ENCODE measurements at regions of chr6 and their contacts with region 1.

Region 1: GRCh38 chr6:111259089-111259831 is 172.0 kb downstream of the SLC16A10 start:
- DNase-seq: peak; percentile 98
- H3K4me3 ChIP-seq: peak overlapping the region; percentile 65 to 84 (median 80)
- H3K27ac ChIP-seq: peak overlapping the region; percentile 68
- H3K4me1 ChIP-seq: peaks cover 22% of the 10 kb centered on the region
- H3K27me3 ChIP-seq: no peaks in the 10 kb centered on the region
- CTCF ChIP-seq: peak; percentile 94 to 96

Region 2: GRCh38 chr6:111430605-111431378 is 171.5 kb after region 1 on chr6:
- CTCF ChIA-PET with region 1: no interaction called
- dilution Hi-C with region 1: no loop called
- in situ Hi-C with region 1: no loop called
- intact Hi-C with region 1: no loop called
- DNase-seq: no peak
- H3K4me3 ChIP-seq: no peak overlapping the region
- H3K27ac ChIP-seq: no peak overlapping the region
- H3K4me1 ChIP-seq: peaks cover 18% of the 10 kb centered on the region
- H3K27me3 ChIP-seq: no peaks in the 10 kb centered on the region
- CTCF ChIP-seq: no peak

Region 3: DNA sequence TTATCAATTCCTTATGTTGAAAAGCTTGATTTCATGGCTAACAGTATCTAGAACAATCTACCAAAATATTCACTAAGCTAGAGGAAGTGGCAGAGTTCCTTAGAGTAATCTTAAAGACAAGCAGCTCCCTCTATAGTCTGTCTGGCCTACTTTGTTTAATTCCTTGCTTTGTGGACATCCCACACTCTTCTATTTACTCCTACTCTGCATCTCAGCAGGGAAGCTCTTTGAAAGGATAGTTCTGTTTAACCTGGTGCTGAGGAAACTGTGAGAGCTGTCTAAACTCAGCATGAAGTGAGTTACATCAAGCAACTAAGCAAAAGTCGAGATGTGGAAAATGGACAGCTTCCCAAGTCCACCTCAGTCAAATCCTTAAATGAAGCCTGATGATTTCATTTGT is 219.5 kb after region 1 on chr6:
- CTCF ChIA-PET with region 1: interaction called, 9 read pairs
- dilution Hi-C with region 1: no loop called
- in situ Hi-C with region 1: no loop called
- intact Hi-C with region 1: loop called (anchors 1 kb)
- DNase-seq: peak; percentile 60
- H3K4me3 ChIP-seq: no peak overlapping the region
- H3K27ac ChIP-seq: peak overlapping the region; percentile 6
- H3K4me1 ChIP-seq: peaks cover 15% of the 10 kb centered on the region
- H3K27me3 ChIP-seq: no peaks in the 10 kb centered on the region
- CTCF ChIP-seq: peak; percentile 32 to 54

Region 4: GRCh38 chr6:111565326-111566221 is 306.3 kb after region 1 on chr6:
- CTCF ChIA-PET with region 1: no interaction called
- dilution Hi-C with region 1: no loop called
- in situ Hi-C with region 1: no loop called
- intact Hi-C with region 1: loop called (anchors 2 kb)
- DNase-seq: no peak
- H3K4me3 ChIP-seq: no peak overlapping the region
- H3K27ac ChIP-seq: peak overlapping the region; percentile 75
- H3K4me1 ChIP-seq: peaks cover 54% of the 10 kb centered on the region
- H3K27me3 ChIP-seq: no peaks in the 10 kb centered on the region
- CTCF ChIP-seq: peak; percentile 19 to 46

Region 5: DNA sequence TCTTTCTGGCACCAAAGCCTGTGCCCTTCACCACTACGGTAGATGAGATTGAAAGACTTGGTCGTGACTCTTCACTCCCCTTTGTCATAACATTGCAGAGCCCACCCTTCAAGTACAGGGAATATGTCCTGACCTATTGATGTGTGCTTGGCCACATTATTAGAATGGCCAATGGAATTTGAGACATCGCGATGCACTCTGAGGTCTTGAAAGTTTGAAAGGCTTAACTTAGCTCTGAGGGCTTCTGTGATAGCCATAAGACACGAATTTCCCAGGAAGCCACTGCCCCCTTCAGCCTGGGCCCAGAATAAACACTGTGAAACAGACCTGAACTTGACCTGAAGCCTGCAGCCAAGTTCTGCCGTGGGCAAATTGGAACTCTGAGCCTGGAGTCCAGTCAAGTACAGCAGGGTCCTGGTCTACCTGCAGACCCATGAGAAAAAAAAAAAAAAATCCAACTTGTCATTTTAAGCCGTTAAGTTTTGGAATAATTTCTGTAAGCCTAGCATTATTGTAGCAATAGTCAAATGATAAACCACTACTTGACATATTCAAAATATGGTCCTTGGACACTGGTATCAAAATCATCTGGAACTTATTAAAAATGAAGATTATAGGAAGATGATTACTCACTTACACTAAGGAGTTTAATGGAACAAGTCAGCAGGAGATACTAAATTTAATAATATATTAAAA is 383.4 kb after region 1 on chr6:
- CTCF ChIA-PET with region 1: no interaction called
- dilution Hi-C with region 1: no loop called
- in situ Hi-C with region 1: no loop called
- intact Hi-C with region 1: loop called (anchors 1 kb)
- DNase-seq: peak; percentile 65
- H3K4me3 ChIP-seq: no peak overlapping the region
- H3K27ac ChIP-seq: no peak overlapping the region
- H3K4me1 ChIP-seq: no peaks in the 10 kb centered on the region
- H3K27me3 ChIP-seq: no peaks in the 10 kb centered on the region
- CTCF ChIP-seq: peak; percentile 54 to 74

Region 6: DNA sequence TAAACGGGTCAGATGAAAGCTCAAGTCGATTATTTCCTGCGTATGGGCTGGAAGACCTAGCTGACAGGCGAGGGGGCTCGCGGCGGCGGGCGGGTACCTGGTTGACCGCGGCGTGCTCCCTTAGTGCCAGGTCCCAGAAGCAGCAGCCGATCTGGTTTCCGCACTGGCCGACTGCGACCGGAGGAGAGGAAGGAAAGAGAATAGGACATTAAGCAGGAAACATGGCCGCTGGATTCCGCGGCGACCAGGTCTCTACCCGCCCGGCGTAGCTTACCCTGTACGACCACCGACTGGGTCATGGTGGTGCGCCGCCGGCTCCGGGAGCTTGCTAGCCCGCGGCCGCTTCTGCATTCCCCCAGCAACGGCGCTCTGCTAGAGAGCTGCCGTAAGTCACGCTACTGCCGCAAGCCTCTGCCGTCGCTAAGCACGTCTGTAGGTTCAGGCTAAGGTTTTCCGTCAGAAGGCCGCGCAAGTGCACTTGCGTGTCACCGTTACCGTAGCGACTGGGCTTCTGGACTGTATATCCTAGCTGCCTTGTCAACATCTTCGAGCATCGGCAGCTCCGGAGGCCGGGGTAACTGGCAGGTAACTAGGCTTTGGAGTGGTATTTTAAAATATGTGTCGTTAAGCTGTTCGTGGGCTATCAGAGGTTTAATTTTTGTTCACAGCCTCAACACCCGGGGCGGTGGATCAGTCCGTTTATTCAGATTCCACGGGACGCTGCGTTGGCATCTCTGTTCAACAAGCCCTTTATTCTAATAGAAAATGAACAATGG is 828.1 kb after region 1 on chr6 and contains the starts of genes FAM229B and TUBE1:
- CTCF ChIA-PET with region 1: interaction called, 13 read pairs
- dilution Hi-C with region 1: no loop called
- in situ Hi-C with region 1: no loop called
- intact Hi-C with region 1: no loop called
- DNase-seq: peak; percentile 91
- H3K4me3 ChIP-seq: peak within 1 kb of the TSS; percentile 73 to 97 (median 93)
- H3K27ac ChIP-seq: peak within 1 kb of the TSS; percentile 74
- H3K4me1 ChIP-seq: peaks cover 5% of the 10 kb centered on the region
- H3K27me3 ChIP-seq: no peaks in the 10 kb centered on the region
- CTCF ChIP-seq: no peak
- total RNA-seq, gene FAM229B: 3.4 to 5.2 TPM
- total RNA-seq, gene TUBE1: 39.8 to 45.7 TPM

Measured in mammary epithelial cell (primary cell).